GM18951 (cell line): ENCODE measurements at regions of chr1 and their contacts with region 1.

Region 1: DNA sequence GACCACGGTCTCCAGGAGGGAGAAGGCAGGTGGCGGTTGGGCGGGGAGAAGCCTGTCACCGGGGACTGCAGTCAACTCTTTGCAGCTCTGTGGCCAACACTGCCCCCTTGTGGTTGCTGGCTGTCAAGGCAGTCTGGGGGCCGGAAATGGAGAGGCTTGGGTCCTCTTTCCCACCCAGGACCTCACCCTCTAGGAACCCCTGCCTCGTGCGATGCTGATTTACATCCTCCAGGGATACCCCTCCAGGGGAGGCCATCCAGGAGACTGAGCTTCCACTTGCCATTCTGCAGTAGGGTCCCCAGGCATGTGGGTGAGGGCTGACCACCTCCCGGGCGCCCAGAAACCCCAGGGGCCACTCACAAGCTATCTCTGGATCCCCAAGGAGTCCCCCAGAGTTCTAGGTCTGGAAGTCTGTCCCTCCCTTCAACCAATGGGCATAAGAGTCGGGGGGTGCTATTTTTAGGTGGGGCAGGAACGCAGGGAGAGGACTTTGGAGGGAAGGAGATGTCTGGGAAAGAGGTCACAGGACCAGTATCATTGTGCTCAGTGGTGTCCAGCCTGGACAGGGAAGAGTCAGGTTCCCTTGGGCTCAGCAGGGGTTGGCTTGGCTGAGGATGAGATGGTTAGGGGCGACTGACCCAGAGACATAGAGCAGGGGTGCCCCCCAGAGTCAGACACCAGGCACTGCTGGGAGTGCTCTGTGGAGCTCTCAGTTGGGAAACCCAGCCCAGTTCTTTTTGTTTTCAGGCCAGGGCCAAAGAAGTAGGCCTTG is 7.1 kb upstream of the GPR61 start:
- POLR2A ChIP-seq: no peak

Region 2: DNA sequence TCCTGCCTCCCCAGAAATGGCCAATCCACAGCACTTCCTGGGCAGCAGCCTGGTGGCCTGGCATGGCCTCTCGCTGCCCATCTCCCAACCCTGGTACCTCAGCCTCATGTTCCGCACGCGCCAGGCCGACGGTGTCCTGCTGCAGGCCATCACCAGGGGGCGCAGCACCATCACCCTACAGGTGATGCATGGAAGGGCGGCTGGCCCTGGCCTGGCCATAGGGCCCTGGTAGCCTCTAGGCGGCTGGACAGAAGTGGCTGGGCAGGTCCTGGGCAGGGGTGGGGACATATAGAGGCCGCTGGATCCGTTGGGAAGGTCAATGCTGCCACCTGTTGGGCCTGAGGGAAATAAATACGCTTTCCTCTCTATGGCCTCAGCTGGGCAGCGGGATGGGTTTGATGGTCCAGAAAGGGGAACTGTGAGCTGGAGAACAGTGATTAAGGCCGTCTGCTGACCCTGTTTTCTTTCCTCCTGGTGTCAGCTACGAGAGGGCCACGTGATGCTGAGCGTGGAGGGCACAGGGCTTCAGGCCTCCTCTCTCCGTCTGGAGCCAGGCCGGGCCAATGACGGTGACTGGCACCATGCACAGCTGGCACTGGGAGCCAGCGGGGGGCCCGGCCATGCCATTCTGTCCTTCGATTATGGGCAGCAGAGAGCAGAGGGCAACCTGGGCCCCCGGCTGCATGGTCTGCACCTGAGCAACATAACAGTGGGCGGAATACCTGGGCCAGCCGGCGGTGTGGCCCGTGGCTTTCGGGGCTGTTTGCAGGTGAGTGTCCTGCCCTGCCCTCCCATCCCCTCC is 268.8 kb before region 1 on chr1:
- in situ Hi-C with region 1: loop called (anchors 10 kb)
- POLR2A ChIP-seq: no peak

Region 3: GRCh38 chr1:109499661-109500536 is 32.7 kb before region 1 on chr1:
- in situ Hi-C with region 1: loop called (anchors 5 kb)
- POLR2A ChIP-seq: no peak